ENCODE measurements at regions of chr1 and their contacts with region 1.

Region 1: DNA sequence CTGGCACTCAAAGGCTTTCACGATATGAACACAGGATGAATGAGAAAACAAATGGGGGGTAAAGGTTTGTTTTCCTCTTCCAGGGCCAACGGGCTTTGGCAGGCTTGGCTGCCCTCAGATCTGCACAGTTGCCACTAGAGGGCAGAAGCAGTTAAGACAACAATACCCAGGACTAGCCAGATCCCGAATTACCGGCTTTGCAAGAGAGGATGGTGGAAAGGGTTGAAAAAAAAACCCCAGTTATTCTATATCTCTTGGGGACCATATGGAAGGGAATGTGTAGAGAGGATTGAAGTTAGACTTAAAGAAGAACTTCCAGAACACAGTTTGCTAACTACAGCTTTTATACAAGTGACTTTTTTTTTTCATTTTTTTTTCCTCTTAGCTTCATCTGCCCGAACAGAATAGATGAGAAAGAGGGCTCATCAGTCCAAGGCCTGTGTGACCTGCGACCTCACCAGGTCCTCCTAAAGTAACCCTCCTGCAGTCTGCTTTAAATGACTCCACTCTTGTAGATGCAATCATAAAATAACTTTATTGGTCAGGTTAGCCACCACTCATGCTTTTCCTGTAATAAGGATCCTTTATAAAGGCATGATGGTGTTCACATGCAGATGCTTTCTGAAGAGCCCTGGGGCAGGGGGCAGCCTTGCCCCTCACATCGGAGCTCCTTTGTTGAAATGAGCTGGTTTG is 10.7 kb downstream of the FMOD start:
- DNase-seq: peak; percentile 84
- CTCF ChIP-seq: peak; percentile 93

Region 2: GRCh38 chr1:202643397-202644218 is 696.6 kb before region 1 on chr1:
- CTCF ChIA-PET with region 1: no interaction called
- POLR2A ChIA-PET with region 1: no interaction called
- DNase-seq: no peak
- CTCF ChIP-seq: no peak

Region 3: GRCh38 chr1:203273206-203273868 is 66.9 kb before region 1 on chr1:
- CTCF ChIA-PET with region 1: interaction called, 690 read pairs
- POLR2A ChIA-PET with region 1: no interaction called
- DNase-seq: peak; percentile 76
- CTCF ChIP-seq: peak; percentile 99

Region 4: GRCh38 chr1:203304919-203305808 is 35.1 kb before region 1 on chr1 and contains the start of gene BTG2:
- CTCF ChIA-PET with region 1: interaction called, 17 read pairs
- POLR2A ChIA-PET with region 1: interaction called, 7 read pairs
- DNase-seq: peak; percentile 96
- CTCF ChIP-seq: no peak

Region 5: GRCh38 chr1:203351037-203352013 is 11.1 kb after region 1 on chr1 and contains the start of gene FMOD:
- CTCF ChIA-PET with region 1: interaction called, 292 read pairs
- POLR2A ChIA-PET with region 1: no interaction called
- DNase-seq: peak; percentile 41
- CTCF ChIP-seq: peak; percentile 27

Region 6: GRCh38 chr1:203428981-203429599 is 88.8 kb after region 1 on chr1:
- CTCF ChIA-PET with region 1: interaction called, 11 read pairs
- POLR2A ChIA-PET with region 1: no interaction called
- DNase-seq: no peak
- CTCF ChIP-seq: no peak

Region 7: GRCh38 chr1:203454986-203455471 is 114.8 kb after region 1 on chr1:
- CTCF ChIA-PET with region 1: interaction called, 11 read pairs
- POLR2A ChIA-PET with region 1: no interaction called
- DNase-seq: no peak
- CTCF ChIP-seq: no peak

Region 8: DNA sequence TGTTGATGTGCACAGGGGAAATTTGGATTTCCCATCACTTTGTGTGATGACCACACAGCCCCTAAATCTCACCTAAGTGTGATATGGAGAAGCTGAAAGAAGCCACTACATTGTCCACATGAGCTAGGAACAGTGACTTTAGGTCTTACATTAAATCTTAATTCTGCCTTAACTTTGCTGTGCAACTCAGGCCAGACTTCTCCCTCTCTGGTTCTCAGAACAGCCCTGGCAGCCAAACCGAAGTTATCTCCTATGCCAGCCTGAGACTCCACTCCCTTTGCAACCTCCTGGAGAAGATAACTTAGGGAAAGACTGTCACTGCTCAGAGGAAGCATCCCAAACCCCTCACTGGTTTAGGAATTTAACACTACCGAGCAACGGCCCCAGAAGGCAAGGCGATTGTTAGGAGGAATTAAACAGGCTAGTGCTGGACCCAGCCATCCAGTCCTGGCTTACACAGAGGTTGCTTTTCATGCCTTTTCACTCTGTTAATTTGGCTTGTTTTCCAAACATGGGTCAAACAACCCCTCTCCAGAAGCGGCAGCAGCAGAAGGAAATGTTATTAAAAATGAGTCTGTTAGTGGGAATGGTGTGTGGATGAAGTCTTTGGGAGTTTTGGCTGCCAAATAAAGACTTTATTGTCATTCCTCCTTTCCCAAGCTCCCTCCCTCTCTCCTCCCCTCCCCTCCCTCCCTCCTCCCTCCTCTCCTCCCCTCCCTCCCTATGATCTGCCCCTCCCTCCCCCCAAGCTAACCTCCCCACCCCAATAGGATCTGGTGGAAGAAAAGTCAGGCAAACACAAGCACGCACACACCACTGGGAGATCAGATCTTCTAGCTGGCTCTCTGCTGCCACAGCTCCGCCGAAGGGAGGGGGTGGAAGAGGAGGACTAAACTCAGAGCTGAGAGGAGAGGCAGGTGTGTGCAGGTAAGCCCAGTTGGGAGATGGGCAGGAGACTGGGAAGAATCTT is 135.0 kb after region 1 on chr1 and contains the start of gene PRELP:
- CTCF ChIA-PET with region 1: interaction called, 26 read pairs
- POLR2A ChIA-PET with region 1: no interaction called
- DNase-seq: no peak
- CTCF ChIP-seq: no peak

Measured in GM10248 (cell line).